ENCODE measurements at regions of chr7 and their contacts with region 1.

Region 1: GRCh38 chr7:92461027-92462003 is 14.0 kb downstream of the GATAD1 start:
- DNase-seq: peak; percentile 29
- ATAC-seq: peak; percentile 90
- H3K4me3 ChIP-seq: no peak overlapping the region
- H3K27ac ChIP-seq: no peak overlapping the region
- H3K4me1 ChIP-seq: no peaks in the 10 kb centered on the region
- H3K27me3 ChIP-seq: no peaks in the 10 kb centered on the region
- CTCF ChIP-seq: peak; percentile 66
- EP300 ChIP-seq: no peak
- POLR2A ChIP-seq: no peak
- RAD21 ChIP-seq: 0 out of 2 replicates have a peak, but pooled peaks have one; percentile 15

Region 2: GRCh38 chr7:92421676-92422435 is 39.5 kb before region 1 on chr7:
- CTCF ChIA-PET with region 1: no interaction called
- POLR2A ChIA-PET with region 1: no interaction called
- in situ Hi-C with region 1: no loop called
- intact Hi-C with region 1: loop called (anchors 5 kb)
- DNase-seq: no peak
- ATAC-seq: no peak
- H3K4me3 ChIP-seq: no peak overlapping the region
- H3K27ac ChIP-seq: no peak overlapping the region
- H3K4me1 ChIP-seq: peaks cover 21% of the 10 kb centered on the region
- H3K27me3 ChIP-seq: no peaks in the 10 kb centered on the region
- CTCF ChIP-seq: no peak
- EP300 ChIP-seq: no peak
- POLR2A ChIP-seq: no peak
- RAD21 ChIP-seq: no peak

Region 3: GRCh38 chr7:92489634-92490033 is 28.3 kb after region 1 on chr7:
- CTCF ChIA-PET with region 1: no interaction called
- POLR2A ChIA-PET with region 1: no interaction called
- in situ Hi-C with region 1: no loop called
- intact Hi-C with region 1: no loop called
- DNase-seq: no peak
- ATAC-seq: no peak
- H3K4me3 ChIP-seq: no peak overlapping the region
- H3K27ac ChIP-seq: no peak overlapping the region
- H3K4me1 ChIP-seq: no peaks in the 10 kb centered on the region
- H3K27me3 ChIP-seq: no peaks in the 10 kb centered on the region
- CTCF ChIP-seq: no peak
- EP300 ChIP-seq: no peak
- POLR2A ChIP-seq: no peak
- RAD21 ChIP-seq: no peak

Region 4: GRCh38 chr7:92584996-92585395 is 123.7 kb after region 1 on chr7:
- CTCF ChIA-PET with region 1: no interaction called
- POLR2A ChIA-PET with region 1: no interaction called
- in situ Hi-C with region 1: no loop called
- intact Hi-C with region 1: no loop called
- DNase-seq: peak; percentile 42
- ATAC-seq: no peak
- H3K4me3 ChIP-seq: 0 out of 6 replicates have a peak overlapping the region, but pooled peaks of 1 of the 3 experiments have one; percentile 14
- H3K27ac ChIP-seq: peak overlapping the region; percentile 33
- H3K4me1 ChIP-seq: peaks cover 47% of the 10 kb centered on the region
- H3K27me3 ChIP-seq: no peaks in the 10 kb centered on the region; a peak in 1 of 5 replicates
- CTCF ChIP-seq: no peak
- EP300 ChIP-seq: no peak
- POLR2A ChIP-seq: no peak
- RAD21 ChIP-seq: no peak

Region 5: GRCh38 chr7:92691578-92691977 is 230.3 kb after region 1 on chr7:
- CTCF ChIA-PET with region 1: no interaction called
- POLR2A ChIA-PET with region 1: no interaction called
- in situ Hi-C with region 1: no loop called
- intact Hi-C with region 1: no loop called
- DNase-seq: peak; percentile 68
- ATAC-seq: no peak
- H3K4me3 ChIP-seq: no peak overlapping the region
- H3K27ac ChIP-seq: peak overlapping the region; percentile 23
- H3K4me1 ChIP-seq: peaks cover 55% of the 10 kb centered on the region
- H3K27me3 ChIP-seq: no peaks in the 10 kb centered on the region
- CTCF ChIP-seq: peak; percentile 50; the same call in 1 of the 2 replicates
- EP300 ChIP-seq: no peak
- POLR2A ChIP-seq: no peak
- RAD21 ChIP-seq: peak; percentile 43; the same call in 1 of the 2 replicates